ENCODE measurements at regions of chr14 and their contacts with region 1.

Region 1: GRCh38 chr14:69673578-69674305 is 62.3 kb downstream of the SUSD6 start:
- DNase-seq: no peak
- H3K4me3 Mint-ChIP-seq: peak overlapping the region; percentile 61
- H3K27ac Mint-ChIP-seq: peak overlapping the region; percentile 97
- H3K4me1 Mint-ChIP-seq: peaks cover 91% of the 10 kb centered on the region
- H3K27me3 Mint-ChIP-seq: no peaks in the 10 kb centered on the region

Region 2: DNA sequence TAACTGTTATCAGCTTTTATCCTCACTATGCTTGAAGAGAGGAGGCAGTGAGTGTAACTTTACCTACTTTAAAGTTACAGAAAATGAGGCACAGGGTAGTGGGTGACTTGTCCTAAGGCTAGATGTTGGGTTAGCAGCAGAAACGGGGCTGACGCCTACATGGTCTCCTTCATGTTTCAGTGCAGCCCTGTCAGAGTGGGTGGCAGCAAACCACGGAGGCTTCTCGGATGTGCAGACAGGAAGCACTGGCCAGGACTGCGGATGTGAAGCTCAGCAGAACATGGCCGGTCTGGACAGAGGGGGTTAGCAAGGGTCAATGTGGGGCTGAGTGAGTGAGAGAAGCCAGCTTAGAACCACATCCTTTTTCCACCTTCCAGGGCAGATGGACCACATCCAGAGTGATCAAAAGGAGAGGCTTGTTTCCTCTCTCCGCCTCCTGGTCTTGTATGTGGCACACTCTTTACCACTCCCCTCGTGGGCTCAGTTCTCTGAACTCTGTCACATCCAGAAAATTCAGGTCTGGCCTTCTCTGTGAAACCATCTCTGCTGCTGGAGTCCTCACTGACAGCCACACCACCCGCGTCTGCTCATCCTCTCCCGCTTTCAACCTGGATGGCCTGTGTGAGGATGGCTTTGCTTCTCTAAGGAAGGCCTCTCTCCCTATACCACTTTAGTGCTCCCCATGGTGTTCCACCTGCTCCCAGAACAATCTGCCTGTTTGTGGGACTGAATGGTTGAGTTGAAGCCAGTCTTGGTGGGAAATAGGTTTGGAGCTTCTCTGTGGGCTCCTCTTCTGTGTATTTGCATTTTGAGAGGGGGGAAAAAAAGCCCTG is 48.2 kb before region 1 on chr14:
- CTCF ChIA-PET with region 1: interaction called, 8 read pairs
- POLR2A ChIA-PET with region 1: interaction called, 11 read pairs
- intact Hi-C with region 1: loop called (anchors 1 kb)
- DNase-seq: peak; percentile 92
- H3K4me3 Mint-ChIP-seq: peak overlapping the region; percentile 71
- H3K27ac Mint-ChIP-seq: peak overlapping the region; percentile 96
- H3K4me1 Mint-ChIP-seq: peaks cover 96% of the 10 kb centered on the region
- H3K27me3 Mint-ChIP-seq: no peaks in the 10 kb centered on the region

Region 3: DNA sequence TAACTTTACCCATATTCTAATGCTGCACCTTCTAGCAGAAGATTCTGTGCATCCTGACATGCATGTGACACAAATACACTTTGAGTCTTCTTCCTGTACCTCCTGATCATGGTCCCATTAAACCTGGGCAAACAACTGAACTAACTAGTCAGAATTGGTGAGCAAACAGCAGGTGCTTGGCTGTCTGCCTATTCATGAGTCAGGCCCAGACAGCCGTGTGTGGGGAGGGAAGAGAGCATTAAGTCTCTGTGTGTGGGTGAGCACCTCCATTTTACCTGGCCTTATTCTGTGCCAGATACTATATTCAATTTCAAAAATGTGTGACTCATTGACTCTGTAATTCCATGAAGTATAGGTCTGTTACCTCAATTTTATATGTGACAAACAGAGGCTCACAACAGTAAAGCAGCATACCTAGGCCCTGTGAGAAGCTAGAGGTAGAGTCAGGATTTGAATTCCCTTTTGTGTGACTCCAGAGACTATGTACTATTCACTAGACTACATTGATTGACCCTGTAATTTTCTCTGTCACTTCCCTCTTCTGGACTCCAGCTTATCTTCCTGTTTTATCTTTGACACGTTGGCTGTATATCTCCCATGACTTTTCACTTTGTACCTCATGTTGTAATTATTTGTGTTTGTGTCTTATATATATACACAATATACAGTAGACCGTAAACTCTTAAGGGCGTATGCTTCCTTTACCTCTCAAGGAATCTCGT is 30.1 kb before region 1 on chr14:
- CTCF ChIA-PET with region 1: interaction called, 3 read pairs
- POLR2A ChIA-PET with region 1: interaction called, 24 read pairs
- intact Hi-C with region 1: loop called (anchors 1 kb)
- DNase-seq: peak; percentile 89
- H3K4me3 Mint-ChIP-seq: peak overlapping the region; percentile 37
- H3K27ac Mint-ChIP-seq: peak overlapping the region; percentile 93
- H3K4me1 Mint-ChIP-seq: peaks cover 86% of the 10 kb centered on the region
- H3K27me3 Mint-ChIP-seq: no peaks in the 10 kb centered on the region

Region 4: DNA sequence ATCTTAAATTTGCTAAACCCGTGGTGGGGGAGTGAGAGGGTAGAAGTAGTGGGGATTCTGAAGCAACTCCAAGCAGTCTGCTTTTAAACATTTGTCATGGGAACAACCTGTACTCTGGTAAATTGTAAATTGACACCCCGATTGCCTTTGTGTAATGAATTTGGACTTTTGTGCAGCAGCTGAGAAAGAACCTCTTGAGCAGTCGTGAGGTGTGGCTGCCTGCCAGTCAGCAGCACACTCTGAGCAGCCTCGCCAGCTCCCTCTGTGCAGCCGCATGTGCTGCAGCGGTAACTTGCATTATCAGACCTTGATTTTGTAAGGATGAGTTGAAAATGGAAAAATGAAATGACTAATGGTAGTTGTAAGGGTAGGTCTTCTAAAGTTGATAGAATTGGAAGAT is 12.0 kb after region 1 on chr14:
- CTCF ChIA-PET with region 1: interaction called, 21 read pairs
- POLR2A ChIA-PET with region 1: interaction called, 19 read pairs
- intact Hi-C with region 1: loop called (anchors 1 kb)
- DNase-seq: peak; percentile 80
- H3K4me3 Mint-ChIP-seq: peak overlapping the region; percentile 57
- H3K27ac Mint-ChIP-seq: peak overlapping the region; percentile 96
- H3K4me1 Mint-ChIP-seq: peaks cover 83% of the 10 kb centered on the region
- H3K27me3 Mint-ChIP-seq: no peaks in the 10 kb centered on the region

Region 5: DNA sequence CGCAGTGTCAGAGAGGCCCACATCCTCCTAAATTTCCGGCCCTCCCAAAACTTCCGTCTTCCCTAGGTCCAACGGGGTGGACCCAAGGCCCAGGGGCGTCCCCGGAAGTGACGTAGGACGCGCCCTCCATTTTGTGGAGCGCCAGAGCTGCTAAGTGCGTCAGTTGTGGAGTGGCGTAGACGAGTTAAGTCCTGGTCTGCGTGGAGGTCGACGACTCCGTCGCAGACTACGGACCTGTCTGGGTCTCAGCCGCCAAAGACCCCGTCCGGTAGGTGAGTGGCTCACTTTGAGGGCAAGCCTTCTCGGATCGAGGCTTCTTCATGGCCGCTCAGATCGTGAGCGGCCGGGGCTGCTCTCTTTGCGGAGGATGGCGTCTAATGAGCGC is 93.2 kb after region 1 on chr14 and contains the start of gene SRSF5:
- CTCF ChIA-PET with region 1: no interaction called
- POLR2A ChIA-PET with region 1: no interaction called
- intact Hi-C with region 1: loop called (anchors 2 kb)
- DNase-seq: peak; percentile 96
- H3K4me3 Mint-ChIP-seq: peak within 1 kb of the TSS; percentile 99
- H3K27ac Mint-ChIP-seq: peak within 1 kb of the TSS; percentile 99
- H3K4me1 Mint-ChIP-seq: peaks cover 73% of the 10 kb centered on the region
- H3K27me3 Mint-ChIP-seq: no peaks in the 10 kb centered on the region
- total RNA-seq, gene SRSF5: 289 to 303 TPM